BJ (cell line): ENCODE measurements at regions of chr14 and their contacts with region 1.

Region 1: GRCh38 chr14:24299255-24300195 is at the starts of genes DHRS1 and NOP9:
- DNase-seq: peak; percentile 32
- H3K4me3 ChIP-seq: peak within 1 kb of the TSS; percentile 72
- H3K27me3 ChIP-seq: no peaks in the 10 kb centered on the region
- CTCF ChIP-seq: no peak
- polyA plus RNA-seq, gene DHRS1: 40.5 and 57.1 TPM in 2 replicates
- polyA plus RNA-seq, gene NOP9: 13.9 and 16.3 TPM in 2 replicates

Region 2: GRCh38 chr14:24179961-24180796 is 119.3 kb before region 1 on chr14:
- CTCF ChIA-PET with region 1: no interaction called
- POLR2A ChIA-PET with region 1: no interaction called
- DNase-seq: peak; percentile 84
- H3K4me3 ChIP-seq: no peak overlapping the region
- H3K27me3 ChIP-seq: no peaks in the 10 kb centered on the region
- CTCF ChIP-seq: no peak

Region 3: DNA sequence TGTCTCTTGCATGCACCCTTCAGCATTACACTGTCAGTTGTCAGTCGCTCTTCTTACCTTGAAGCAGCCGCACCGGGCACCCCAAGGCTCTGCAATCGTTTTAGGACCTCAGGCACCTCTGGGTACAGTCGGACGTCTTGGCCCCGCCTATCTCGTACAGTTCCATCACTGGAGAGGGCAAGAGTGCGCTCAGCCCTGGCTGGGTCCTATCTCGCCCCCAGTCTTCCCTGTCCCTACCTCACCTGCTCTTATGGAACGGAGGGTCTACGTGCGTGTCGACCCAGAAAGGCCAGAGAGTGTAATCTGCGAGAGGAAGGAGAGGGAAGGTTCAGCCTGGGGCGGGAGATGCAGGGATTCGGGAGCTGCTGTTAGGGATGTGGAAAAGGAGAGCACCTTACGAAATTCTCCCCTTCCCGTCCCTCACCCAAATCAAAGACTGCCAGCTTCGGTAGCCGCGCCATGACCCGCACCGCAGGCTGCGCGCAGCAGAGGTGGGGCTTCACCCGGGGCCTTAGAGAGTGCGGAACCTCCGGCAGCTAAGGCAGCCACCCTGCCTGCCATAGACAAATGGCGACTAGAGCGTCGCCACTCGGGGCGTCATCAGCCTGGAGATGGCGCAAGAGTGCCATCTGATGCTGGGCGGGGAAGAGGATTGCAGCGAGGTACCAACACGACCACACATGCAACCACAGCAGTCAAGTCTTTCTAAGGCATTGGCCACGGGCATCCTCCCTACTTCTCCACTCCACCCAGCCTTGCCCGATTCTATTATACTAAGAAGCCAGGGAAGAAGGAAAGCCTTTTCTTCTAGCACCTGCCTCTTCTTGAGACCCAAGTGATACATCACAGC is 83.8 kb before region 1 on chr14 and contains the start of gene MDP1:
- CTCF ChIA-PET with region 1: interaction called, 12 read pairs
- POLR2A ChIA-PET with region 1: no interaction called
- DNase-seq: peak; percentile 38
- H3K4me3 ChIP-seq: peak within 1 kb of the TSS; percentile 64
- H3K27me3 ChIP-seq: no peaks in the 10 kb centered on the region
- CTCF ChIP-seq: peak; percentile 47
- polyA plus RNA-seq, gene MDP1: 16.3 and 19.3 TPM in 2 replicates

Region 4: DNA sequence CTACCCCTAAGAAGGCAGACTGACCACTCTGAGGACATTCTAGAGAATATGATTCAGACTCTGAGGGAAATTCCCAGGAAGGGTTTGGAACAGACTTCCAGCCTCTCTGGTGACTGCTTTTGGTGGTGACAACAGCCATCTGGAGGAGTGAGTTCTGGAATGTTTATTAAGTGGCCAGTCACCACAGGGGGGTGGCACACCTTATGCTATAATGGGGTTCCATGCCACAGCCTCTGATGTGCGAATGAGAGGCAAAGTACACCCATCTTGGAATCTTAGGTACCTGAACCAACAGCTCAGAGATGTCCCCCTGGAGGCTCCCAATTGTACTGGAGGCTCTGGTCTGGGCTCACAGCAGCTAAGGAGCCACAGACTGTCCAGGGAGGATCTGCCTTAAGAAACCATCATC is 47.6 kb before region 1 on chr14:
- CTCF ChIA-PET with region 1: interaction called, 205 read pairs
- POLR2A ChIA-PET with region 1: no interaction called
- DNase-seq: no peak
- H3K4me3 ChIP-seq: no peak overlapping the region
- H3K27me3 ChIP-seq: no peaks in the 10 kb centered on the region
- CTCF ChIP-seq: peak; percentile 15; the same call in 1 of the 2 replicates

Region 5: GRCh38 chr14:24271134-24271833 is 28.2 kb before region 1 on chr14 and contains the start of gene RABGGTA:
- CTCF ChIA-PET with region 1: interaction called, 21 read pairs
- POLR2A ChIA-PET with region 1: no interaction called
- DNase-seq: no peak
- H3K4me3 ChIP-seq: peak within 1 kb of the TSS; percentile 91
- H3K27me3 ChIP-seq: no peaks in the 10 kb centered on the region
- CTCF ChIP-seq: peak; percentile 76
- polyA plus RNA-seq, gene RABGGTA: 23.2 and 52.5 TPM in 2 replicates

Region 6: GRCh38 chr14:24310646-24311604 is 11.4 kb after region 1 on chr14 and contains the start of gene LTB4R:
- CTCF ChIA-PET with region 1: interaction called, 107 read pairs
- POLR2A ChIA-PET with region 1: no interaction called
- DNase-seq: no peak
- H3K4me3 ChIP-seq: peak within 1 kb of the TSS; percentile 25
- H3K27me3 ChIP-seq: no peaks in the 10 kb centered on the region
- CTCF ChIP-seq: peak; percentile 33
- polyA plus RNA-seq, gene LTB4R: 2.5 and 2.6 TPM in 2 replicates